Mammary epithelial cell (primary cell): ENCODE measurements at regions of chr6 and their contacts with region 1.

Region 1: DNA sequence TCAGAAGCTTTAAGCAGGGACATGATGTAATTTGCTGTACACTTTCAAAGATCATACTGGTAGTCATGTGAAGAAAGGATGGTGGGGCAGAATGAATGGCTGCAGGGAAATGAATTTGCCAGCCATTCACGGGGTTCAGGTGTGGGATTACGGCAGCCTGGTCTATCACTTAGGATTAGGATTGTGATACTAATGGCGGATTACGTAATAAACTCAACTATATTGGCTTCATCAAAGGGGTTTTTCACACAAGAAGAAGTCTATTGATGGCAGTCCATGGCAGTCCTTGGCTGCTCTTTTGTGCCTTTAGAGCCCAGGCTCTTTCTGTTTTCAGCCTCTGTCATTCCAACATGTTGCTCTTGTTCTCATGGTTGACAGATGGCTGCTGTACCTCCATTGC is 12.6 kb upstream of the EEF1E1 start:
- DNase-seq: no peak
- H3K4me3 ChIP-seq: no peak overlapping the region
- H3K27ac ChIP-seq: no peak overlapping the region
- H3K4me1 ChIP-seq: no peaks in the 10 kb centered on the region
- H3K27me3 ChIP-seq: no peaks in the 10 kb centered on the region
- CTCF ChIP-seq: no peak

Region 2: DNA sequence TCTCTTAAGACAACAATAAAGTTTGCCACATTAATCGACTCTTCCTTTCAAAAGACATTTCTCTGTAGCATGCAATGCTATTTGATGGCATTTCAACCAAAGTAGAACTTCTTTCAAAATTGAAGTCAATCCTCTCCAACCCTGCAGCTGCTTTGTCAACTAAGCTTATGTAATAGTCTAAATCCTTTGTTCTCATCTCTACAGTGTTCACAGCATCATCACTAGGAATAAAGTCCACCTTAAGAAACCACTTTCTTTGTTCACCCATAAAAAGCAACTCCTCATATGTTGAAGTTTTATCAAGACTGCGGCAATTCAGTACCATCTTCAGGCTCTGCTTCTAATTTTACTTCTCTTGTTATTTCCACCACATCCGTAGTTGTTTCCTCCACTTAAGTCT is 39.3 kb before region 1 on chr6:
- CTCF ChIA-PET with region 1: no interaction called
- dilution Hi-C with region 1: loop called (anchors 5 kb)
- in situ Hi-C with region 1: no loop called
- intact Hi-C with region 1: no loop called
- DNase-seq: no peak
- H3K4me3 ChIP-seq: no peak overlapping the region
- H3K27ac ChIP-seq: no peak overlapping the region
- H3K4me1 ChIP-seq: peaks cover 10% of the 10 kb centered on the region
- H3K27me3 ChIP-seq: no peaks in the 10 kb centered on the region
- CTCF ChIP-seq: no peak